Right cardiac atrium (tissue), 5 donors: ENCODE measurements at regions of chr1 and their contacts with region 1.

Region 1: GRCh38 chr1:170881268-170882265 is 53.8 kb upstream of the MROH9 start:
- DNase-seq: no peak
- ATAC-seq: peak; percentile 40 to 75
- H3K4me3 ChIP-seq: peak overlapping the region; percentile 38
- H3K27ac ChIP-seq: no peak overlapping the region
- H3K4me1 ChIP-seq: no peaks in the 10 kb centered on the region
- H3K27me3 ChIP-seq: no peaks in the 10 kb centered on the region

Region 2: GRCh38 chr1:169928438-169929209 is 952.9 kb before region 1 on chr1:
- intact Hi-C with region 1: loop called in 1 of 4 experiments (anchors 10 kb)
- DNase-seq: no peak
- ATAC-seq: peak in 1 of 2 donors; percentile 46
- H3K4me3 ChIP-seq: no peak overlapping the region
- H3K27ac ChIP-seq: no peak overlapping the region
- H3K4me1 ChIP-seq: no peaks in the 10 kb centered on the region
- H3K27me3 ChIP-seq: no peaks in the 10 kb centered on the region

Region 3: GRCh38 chr1:170670802-170671628 is 210.6 kb before region 1 on chr1:
- intact Hi-C with region 1: loop called in 3 of 4 experiments (anchors 10 kb)
- DNase-seq: peak; percentile 63 to 85 (median 84)
- ATAC-seq: peak; percentile 63 to 64
- H3K4me3 ChIP-seq: peak overlapping the region; percentile 16
- H3K27ac ChIP-seq: no peak overlapping the region
- H3K4me1 ChIP-seq: no peaks in the 10 kb centered on the region
- H3K27me3 ChIP-seq: no peaks in the 10 kb centered on the region

Region 4: GRCh38 chr1:170807432-170807831 is 74.1 kb before region 1 on chr1:
- intact Hi-C with region 1: loop called in 1 of 4 experiments (anchors 10 kb)
- DNase-seq: no peak
- ATAC-seq: peak in 1 of 2 donors; percentile 24
- H3K4me3 ChIP-seq: no peak overlapping the region
- H3K27ac ChIP-seq: no peak overlapping the region
- H3K4me1 ChIP-seq: no peaks in the 10 kb centered on the region
- H3K27me3 ChIP-seq: no peaks in the 10 kb centered on the region

Region 5: DNA sequence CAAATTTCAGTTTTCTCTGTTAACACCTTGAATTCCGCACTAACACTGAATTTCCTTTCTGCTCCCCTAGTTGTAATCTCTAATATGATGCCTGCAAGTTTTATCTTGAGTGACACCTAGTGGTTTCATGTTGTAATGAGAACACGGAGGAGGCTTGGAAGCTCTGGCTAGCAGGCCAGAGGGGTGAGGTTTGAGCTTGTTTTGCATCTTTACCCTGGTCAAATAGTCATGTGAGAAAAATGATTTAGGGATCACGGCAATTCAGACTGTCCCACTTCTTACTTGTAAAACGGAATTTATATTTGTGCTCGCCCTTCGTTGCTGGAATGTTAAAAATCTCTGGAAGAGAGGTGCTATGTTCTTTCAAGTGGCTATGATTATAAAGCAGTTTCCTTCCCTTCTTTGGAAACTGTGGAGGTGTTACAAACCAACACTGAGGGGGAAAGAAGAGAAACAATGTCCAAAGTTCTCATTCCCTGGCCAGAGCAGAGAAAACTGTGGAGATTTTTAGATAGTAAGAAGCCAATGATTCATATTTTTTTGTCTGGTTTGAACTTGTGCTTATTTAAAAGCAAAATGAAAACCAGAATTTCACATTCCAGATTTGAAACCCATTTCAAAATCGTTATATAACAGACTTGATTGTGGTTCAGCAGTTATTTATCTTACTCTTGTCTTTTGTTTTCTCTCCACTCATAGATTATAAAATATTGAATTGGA is 48.4 kb after region 1 on chr1:
- intact Hi-C with region 1: no loop called
- DNase-seq: peak in 2 of 3 donors; percentile 28 to 43
- ATAC-seq: peak; percentile 89 to 94
- H3K4me3 ChIP-seq: no peak overlapping the region
- H3K27ac ChIP-seq: peak overlapping the region; percentile 58
- H3K4me1 ChIP-seq: peaks cover 3% of the 10 kb centered on the region
- H3K27me3 ChIP-seq: no peaks in the 10 kb centered on the region